Ovary (tissue), 10 donors: ENCODE measurements at regions of chr3 and their contacts with region 1.

Region 1: GRCh38 chr3:54963641-54964040 is 35.8 kb upstream of the LRTM1 start:
- DNase-seq: no peak
- H3K4me3 ChIP-seq: no peak overlapping the region
- H3K27ac ChIP-seq: no peak overlapping the region
- H3K4me1 ChIP-seq: no peaks in the 10 kb centered on the region
- H3K27me3 ChIP-seq: no peaks in the 10 kb centered on the region
- CTCF ChIP-seq: no peak
- EP300 ChIP-seq: no peak
- POLR2A ChIP-seq: no peak

Region 2: GRCh38 chr3:54982807-54983206 is 19.2 kb after region 1 on chr3:
- intact Hi-C with region 1: no loop called
- DNase-seq: no peak
- H3K4me3 ChIP-seq: no peak overlapping the region
- H3K27ac ChIP-seq: no peak overlapping the region
- H3K4me1 ChIP-seq: no peaks in the 10 kb centered on the region
- H3K27me3 ChIP-seq: no peaks in the 10 kb centered on the region
- CTCF ChIP-seq: no peak
- EP300 ChIP-seq: no peak
- POLR2A ChIP-seq: no peak

Region 3: DNA sequence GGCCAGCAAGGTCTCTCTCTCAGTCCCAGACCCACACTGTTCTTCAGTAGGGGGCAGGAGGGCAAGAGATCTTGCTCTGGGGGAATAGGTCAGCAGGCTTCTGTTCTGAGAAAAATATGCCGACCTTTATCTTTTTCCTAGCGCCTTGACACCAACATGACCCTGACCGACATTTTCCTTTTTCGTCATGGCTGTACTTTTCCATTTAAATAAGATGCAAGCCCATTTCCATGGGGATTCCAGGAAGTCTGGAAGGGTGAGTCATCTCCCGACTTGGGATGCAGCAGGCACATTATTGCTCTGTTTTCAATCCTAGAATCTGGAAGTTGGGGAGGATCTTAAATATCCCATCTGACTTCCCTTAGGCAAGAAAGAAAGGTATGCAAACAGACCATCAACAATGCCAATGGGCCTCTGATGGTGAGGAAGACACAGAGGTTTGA is 225.7 kb after region 1 on chr3:
- intact Hi-C with region 1: loop called in 1 of 4 experiments (anchors 5 kb)
- DNase-seq: no peak
- H3K4me3 ChIP-seq: no peak overlapping the region
- H3K27ac ChIP-seq: no peak overlapping the region
- H3K4me1 ChIP-seq: no peaks in the 10 kb centered on the region
- H3K27me3 ChIP-seq: no peaks in the 10 kb centered on the region
- CTCF ChIP-seq: no peak
- EP300 ChIP-seq: no peak
- POLR2A ChIP-seq: no peak